Spleen (tissue), 13 donors: ENCODE measurements at regions of chr20 and their contacts with region 1.

Region 1: GRCh38 chr20:33653218-33653899 is 8.8 kb upstream of the C20orf144 start:
- DNase-seq: peak; percentile 79
- H3K4me3 ChIP-seq: no peak overlapping the region
- H3K27ac ChIP-seq: peak overlapping the region in 1 of 8 donors; percentile 46
- H3K4me1 ChIP-seq: peaks cover 0 to 25% (median 11%) of the 10 kb centered on the region in 6 donors
- H3K27me3 ChIP-seq: no peaks in the 10 kb centered on the region
- CTCF ChIP-seq: peak; percentile 66 to 87 (median 79)
- POLR2A ChIP-seq: no peak

Region 2: DNA sequence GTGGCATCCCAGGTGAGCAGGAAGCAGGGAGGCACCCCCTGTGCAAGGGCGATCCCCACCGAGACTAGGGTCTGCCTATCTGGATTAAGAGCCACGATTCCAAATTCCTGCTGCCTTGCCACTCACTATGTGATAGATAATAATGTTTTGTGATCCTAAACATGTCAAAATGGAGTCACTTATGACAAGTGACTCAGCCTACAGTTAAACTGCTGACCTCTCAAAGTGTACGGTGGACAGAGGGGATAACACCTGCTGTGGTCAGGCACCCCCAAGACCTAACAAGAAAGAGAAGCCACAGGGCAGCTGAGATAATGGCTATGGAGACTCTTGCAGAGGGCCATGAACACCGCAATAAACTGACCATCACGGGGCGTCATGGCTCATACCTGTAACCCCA is 193.8 kb before region 1 on chr20:
- intact Hi-C with region 1: loop called (anchors 5 kb)
- DNase-seq: no peak
- H3K4me3 ChIP-seq: no peak overlapping the region
- H3K27ac ChIP-seq: no peak overlapping the region
- H3K4me1 ChIP-seq: peaks cover 0 to 21% (median 0%) of the 10 kb centered on the region in 6 donors
- H3K27me3 ChIP-seq: no peaks in the 10 kb centered on the region
- CTCF ChIP-seq: no peak
- POLR2A ChIP-seq: no peak

Region 3: GRCh38 chr20:33954504-33954903 is 301.1 kb after region 1 on chr20:
- intact Hi-C with region 1: no loop called
- DNase-seq: no peak
- H3K4me3 ChIP-seq: no peak overlapping the region
- H3K27ac ChIP-seq: no peak overlapping the region
- H3K4me1 ChIP-seq: no peaks in the 10 kb centered on the region
- H3K27me3 ChIP-seq: no peaks in the 10 kb centered on the region
- CTCF ChIP-seq: no peak
- POLR2A ChIP-seq: no peak